HepG2 (cell line): ENCODE measurements at regions of chr6 and their contacts with region 1.

Region 1: DNA sequence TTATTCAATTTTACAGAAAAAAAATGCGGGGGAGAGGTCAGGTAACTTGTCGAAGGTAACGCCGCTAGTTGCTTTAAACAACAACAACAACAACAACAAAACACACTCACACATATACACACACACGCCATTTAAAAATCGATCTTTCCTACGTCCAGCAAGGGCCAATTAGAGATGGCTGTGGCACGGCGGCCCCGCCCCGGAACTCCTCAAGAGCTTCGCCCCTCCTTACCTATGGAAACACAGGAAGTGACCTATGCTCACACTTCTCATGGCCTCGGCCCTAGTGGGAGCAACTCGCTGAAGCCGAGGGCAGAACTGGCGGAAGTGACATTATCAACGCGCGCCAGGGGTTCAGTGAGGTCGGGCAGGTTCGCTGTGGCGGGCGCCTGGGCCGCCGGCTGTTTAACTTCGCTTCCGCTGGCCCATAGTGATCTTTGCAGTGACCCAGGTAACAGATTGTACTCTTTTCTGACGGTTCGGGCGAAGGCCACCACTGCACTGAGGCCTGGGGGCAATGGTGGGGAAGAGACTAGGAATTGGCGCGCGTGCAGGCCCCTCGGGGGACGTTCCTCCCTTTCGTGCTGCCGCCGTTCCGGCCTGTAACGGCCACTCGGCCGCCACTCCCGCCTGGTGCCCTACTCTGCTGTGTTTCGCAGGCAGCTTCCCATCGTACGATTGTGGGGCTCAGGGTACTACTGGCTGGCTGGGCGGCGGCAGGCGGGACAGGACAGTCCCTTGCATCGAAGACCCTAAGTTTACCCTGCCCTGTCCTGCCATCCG is at the start of gene TBP:
- DNase-seq: peak; percentile 100
- ATAC-seq: peak; percentile 92
- H3K4me3 ChIP-seq: peak within 1 kb of the TSS; percentile 98 to 99 (median 98)
- H3K27ac ChIP-seq: peak within 1 kb of the TSS; percentile 95
- H3K4me1 ChIP-seq: peaks cover 51% of the 10 kb centered on the region
- H3K27me3 ChIP-seq: peaks cover 0 to 5% of the 10 kb centered on the region in 2 experiments; a peak in 1 of 5 replicates
- CTCF ChIP-seq: peak; percentile 26; the same call in 1 of the 2 replicates
- EP300 ChIP-seq: peak in 1 of 2 experiments; percentile 40; a peak in 2 of 4 replicates
- POLR2A ChIP-seq: peak; percentile 75 to 93
- RAD21 ChIP-seq: peak; percentile 40; the same call in 1 of the 2 replicates
- total RNA-seq, gene TBP: 21.7 and 25.9 TPM in 2 replicates

Region 2: DNA sequence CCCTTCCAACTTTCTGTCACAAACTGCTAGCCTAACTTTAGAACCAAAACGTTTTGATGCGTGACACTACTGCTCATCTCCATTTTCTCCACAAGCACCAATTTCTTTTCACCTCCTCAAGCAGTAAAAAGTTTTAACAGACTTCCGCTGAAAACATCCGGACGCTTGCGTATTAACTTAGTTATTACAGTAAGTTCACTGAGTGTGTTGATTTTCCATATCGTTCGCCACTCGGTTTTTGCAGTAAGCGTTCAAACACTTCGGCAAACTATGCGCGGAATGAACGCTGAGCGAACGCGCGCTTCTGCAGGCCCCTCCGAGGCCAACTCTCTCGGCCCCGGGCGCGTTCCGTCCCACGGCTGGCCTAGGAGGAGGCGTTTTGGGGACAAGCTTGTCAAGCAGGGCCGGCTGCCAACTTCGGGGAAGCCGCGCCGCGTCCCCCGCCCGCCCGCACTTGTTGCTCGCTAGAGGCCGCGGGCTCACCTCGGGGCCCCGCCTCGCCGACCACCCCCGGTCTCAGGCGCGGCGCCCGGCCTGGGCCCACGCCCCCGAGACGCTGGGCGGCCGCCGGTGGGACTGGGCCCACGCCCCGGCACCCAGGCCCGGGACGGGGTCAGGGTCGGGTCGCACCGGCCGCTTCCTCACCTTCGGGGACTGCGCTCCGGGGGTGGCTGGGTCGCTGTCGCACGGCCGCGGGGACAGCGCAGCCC is 830.8 kb before region 1 on chr6:
- CTCF ChIA-PET with region 1: no interaction called
- POLR2A ChIA-PET with region 1: interaction called, 11 read pairs
- in situ Hi-C with region 1: no loop called
- intact Hi-C with region 1: no loop called
- DNase-seq: peak; percentile 39
- ATAC-seq: peak; percentile 20
- H3K4me3 ChIP-seq: peak overlapping the region; percentile 82 to 93 (median 90)
- H3K27ac ChIP-seq: peak overlapping the region; percentile 72
- H3K4me1 ChIP-seq: peaks cover 60% of the 10 kb centered on the region
- H3K27me3 ChIP-seq: no peaks in the 10 kb centered on the region; a peak in 1 of 5 replicates
- CTCF ChIP-seq: 0 out of 2 replicates have a peak, but pooled peaks have one; percentile 10
- EP300 ChIP-seq: no peak
- POLR2A ChIP-seq: no peak
- RAD21 ChIP-seq: peak; percentile 28; the same call in 1 of the 2 replicates

Region 3: DNA sequence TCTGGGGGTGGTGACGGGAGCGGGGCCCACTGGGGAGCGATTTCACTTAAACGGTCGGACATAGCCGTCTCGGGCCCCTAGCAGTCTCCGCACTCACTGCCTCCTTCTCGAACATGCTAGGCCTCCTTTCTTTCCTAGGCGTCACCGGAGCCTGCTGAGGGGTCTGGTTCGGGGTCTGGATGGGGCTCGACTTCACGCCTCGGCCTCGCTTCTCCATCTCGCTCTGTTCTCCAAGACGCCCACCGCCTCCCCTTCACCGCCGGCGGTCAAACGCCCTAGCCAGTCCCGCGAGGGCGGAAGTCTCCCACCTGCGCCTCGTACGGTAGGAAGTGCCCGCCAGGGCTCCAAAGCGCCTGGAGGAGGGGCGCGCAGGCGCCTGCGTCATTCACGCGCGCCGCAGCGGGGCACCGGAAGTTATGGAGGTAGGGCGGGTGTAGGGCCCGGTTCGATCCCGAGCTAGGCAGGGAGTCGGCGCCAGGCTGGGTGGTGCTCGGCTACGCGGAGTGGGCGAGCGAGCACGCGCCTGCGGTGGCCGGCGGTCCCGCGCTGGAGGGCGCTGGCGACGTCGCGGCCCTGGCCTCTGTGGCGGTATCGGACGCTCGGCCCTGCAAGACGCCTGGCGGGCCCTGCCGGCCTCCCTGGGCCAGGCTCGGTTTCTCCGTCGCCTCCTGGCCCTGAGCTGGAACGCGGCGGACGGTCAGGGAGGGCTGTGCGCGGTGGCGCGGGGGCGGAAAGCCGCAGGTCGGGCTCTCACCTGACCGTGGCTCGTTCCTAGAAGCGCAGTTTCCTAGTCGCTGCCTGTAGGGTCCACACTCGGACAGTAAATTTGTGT is 802.7 kb before region 1 on chr6 and contains the starts of genes DYNLT2 and ERMARD:
- CTCF ChIA-PET with region 1: no interaction called
- POLR2A ChIA-PET with region 1: interaction called, 22 read pairs
- in situ Hi-C with region 1: loop called (anchors 5 kb)
- intact Hi-C with region 1: loop called (anchors 1 kb)
- DNase-seq: peak; percentile 96
- ATAC-seq: peak; percentile 95
- H3K4me3 ChIP-seq: peak within 1 kb of the TSS; percentile 88 to 91 (median 90)
- H3K27ac ChIP-seq: peak within 1 kb of the TSS; percentile 96
- H3K4me1 ChIP-seq: peaks cover 48% of the 10 kb centered on the region
- H3K27me3 ChIP-seq: no peaks in the 10 kb centered on the region; a peak in 1 of 5 replicates
- CTCF ChIP-seq: peak; percentile 52
- EP300 ChIP-seq: peak in 1 of 2 experiments; percentile 68; a peak in 3 of 4 replicates
- POLR2A ChIP-seq: peak; percentile 90 to 99
- RAD21 ChIP-seq: peak; percentile 88
- total RNA-seq, gene DYNLT2: 3.1 and 4.3 TPM in 2 replicates
- total RNA-seq, gene ERMARD: 8.4 and 10.7 TPM in 2 replicates

Region 4: DNA sequence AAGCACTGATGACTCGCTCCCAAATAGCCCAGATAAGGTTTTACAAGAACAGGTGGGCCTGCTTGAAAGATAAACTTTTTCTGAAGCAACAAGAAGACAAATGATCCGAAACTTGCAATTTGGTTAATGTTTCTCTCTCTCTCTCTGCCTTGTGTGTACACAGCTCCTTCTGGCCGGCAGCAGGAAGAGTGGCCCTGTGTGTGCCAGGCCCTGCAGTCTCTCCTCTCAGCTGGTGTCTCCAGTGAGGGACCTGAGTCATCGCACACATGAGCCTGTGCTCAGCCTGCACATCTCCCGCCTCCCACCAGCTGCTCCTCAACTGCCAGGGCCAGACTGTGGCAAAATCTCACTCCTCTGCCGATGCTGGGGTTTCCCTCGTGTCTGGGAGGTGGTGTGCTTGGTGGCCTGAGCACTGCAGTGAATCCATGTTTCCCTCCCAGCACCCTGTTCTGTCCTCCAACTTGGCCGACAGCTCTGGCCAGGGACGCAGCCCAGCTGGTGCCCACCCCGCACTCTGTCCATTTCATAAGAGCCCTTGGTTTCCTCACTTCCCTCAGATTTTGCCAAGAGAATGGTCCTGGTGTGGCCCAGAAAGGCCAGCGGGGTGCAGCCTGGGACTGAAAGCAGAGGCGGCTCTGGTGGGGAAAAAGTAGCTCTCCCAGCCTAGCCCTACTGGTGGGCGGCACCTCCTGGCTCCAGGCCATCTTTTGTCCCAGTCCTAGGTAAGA is 753.4 kb before region 1 on chr6:
- CTCF ChIA-PET with region 1: no interaction called
- POLR2A ChIA-PET with region 1: interaction called, 3 read pairs
- in situ Hi-C with region 1: no loop called
- intact Hi-C with region 1: loop called (anchors 5 kb)
- DNase-seq: peak; percentile 91
- ATAC-seq: peak; percentile 88
- H3K4me3 ChIP-seq: peak overlapping the region; percentile 41 to 74 (median 51)
- H3K27ac ChIP-seq: peak overlapping the region; percentile 82
- H3K4me1 ChIP-seq: peaks cover 80% of the 10 kb centered on the region
- H3K27me3 ChIP-seq: no peaks in the 10 kb centered on the region
- CTCF ChIP-seq: 0 out of 2 replicates have a peak, but pooled peaks have one; percentile 11
- EP300 ChIP-seq: peak; percentile 72 to 91
- POLR2A ChIP-seq: peak; percentile 55 to 72
- RAD21 ChIP-seq: no peak; the same call in 1 of the 2 replicates

Region 5: GRCh38 chr6:170279977-170280688 is 274.1 kb before region 1 on chr6:
- CTCF ChIA-PET with region 1: no interaction called
- POLR2A ChIA-PET with region 1: no interaction called
- in situ Hi-C with region 1: no loop called
- intact Hi-C with region 1: no loop called
- DNase-seq: no peak
- ATAC-seq: peak; percentile 61
- H3K4me3 ChIP-seq: peak overlapping the region in 1 of 3 experiments; percentile 18; a peak in 1 of 6 replicates
- H3K27ac ChIP-seq: no peak overlapping the region
- H3K4me1 ChIP-seq: peaks cover 8% of the 10 kb centered on the region; the same call in 1 of the 2 replicates
- H3K27me3 ChIP-seq: peaks cover 14 to 81% of the 10 kb centered on the region in 2 experiments
- CTCF ChIP-seq: no peak
- EP300 ChIP-seq: no peak
- POLR2A ChIP-seq: no peak
- RAD21 ChIP-seq: no peak

Region 6: GRCh38 chr6:170306324-170307079 is 247.7 kb before region 1 on chr6 and contains the start of gene FAM120B:
- CTCF ChIA-PET with region 1: no interaction called
- POLR2A ChIA-PET with region 1: no interaction called
- in situ Hi-C with region 1: no loop called
- intact Hi-C with region 1: loop called (anchors 5 kb)
- DNase-seq: peak; percentile 94
- ATAC-seq: peak; percentile 97
- H3K4me3 ChIP-seq: peak within 1 kb of the TSS; percentile 78 to 98 (median 92)
- H3K27ac ChIP-seq: peak within 1 kb of the TSS; percentile 67
- H3K4me1 ChIP-seq: peaks cover 28% of the 10 kb centered on the region
- H3K27me3 ChIP-seq: no peaks in the 10 kb centered on the region; a peak in 1 of 5 replicates
- CTCF ChIP-seq: peak; percentile 24; the same call in 1 of the 2 replicates
- EP300 ChIP-seq: 0 out of 4 replicates have a peak, but pooled peaks of 1 of the 2 experiments have one; percentile 10
- POLR2A ChIP-seq: peak; percentile 97 to 99
- RAD21 ChIP-seq: peak; percentile 63
- total RNA-seq, gene FAM120B: 10.7 and 18.3 TPM in 2 replicates

Region 7: DNA sequence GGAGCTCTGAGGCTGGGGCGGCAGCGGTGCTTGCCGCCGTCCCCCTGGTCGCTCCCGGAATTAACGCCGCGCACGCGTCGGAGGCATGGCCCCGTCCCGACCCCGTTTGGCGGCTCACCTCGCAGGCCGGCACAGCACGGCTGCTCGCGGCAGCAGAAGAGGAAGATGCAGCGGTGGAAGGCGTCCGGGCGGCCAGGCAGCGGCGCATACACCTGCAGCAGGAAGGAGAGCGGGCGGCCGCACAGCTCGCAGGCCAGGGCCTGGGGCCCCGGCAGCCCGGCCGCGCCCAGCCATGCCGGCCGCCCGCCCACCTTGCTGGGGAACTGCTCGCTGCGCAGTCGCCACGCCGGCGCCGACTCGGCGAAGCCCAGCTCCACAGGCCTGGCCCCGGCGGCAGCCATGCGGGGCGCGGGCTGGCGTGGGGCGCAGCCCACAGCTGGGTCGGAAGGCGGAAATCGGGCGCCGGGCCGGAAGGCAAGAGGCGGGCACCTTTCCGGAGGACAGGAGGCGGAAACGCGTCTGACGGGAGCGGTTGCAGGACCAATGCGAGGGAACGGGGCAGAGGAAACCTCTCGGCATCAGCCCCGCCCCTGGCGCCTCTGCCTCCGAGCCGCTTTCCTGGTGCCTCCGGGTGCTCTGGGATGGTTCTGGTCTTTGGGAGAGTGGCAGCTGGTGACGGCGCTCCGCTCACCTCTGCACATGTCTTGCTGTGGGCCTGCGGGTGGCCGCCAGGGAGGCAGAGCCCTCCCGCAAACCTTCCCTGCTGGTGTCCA is 30.2 kb after region 1 on chr6 and contains the start of gene PDCD2:
- CTCF ChIA-PET with region 1: no interaction called
- POLR2A ChIA-PET with region 1: interaction called, 20 read pairs
- in situ Hi-C with region 1: no loop called
- intact Hi-C with region 1: loop called (anchors 1 kb)
- DNase-seq: peak; percentile 91
- ATAC-seq: peak; percentile 97
- H3K4me3 ChIP-seq: peak within 1 kb of the TSS; percentile 93 to 97 (median 96)
- H3K27ac ChIP-seq: peak within 1 kb of the TSS; percentile 79
- H3K4me1 ChIP-seq: peaks cover 25% of the 10 kb centered on the region
- H3K27me3 ChIP-seq: no peaks in the 10 kb centered on the region; a peak in 1 of 5 replicates
- CTCF ChIP-seq: no peak; the same call in 1 of the 2 replicates
- EP300 ChIP-seq: peak; percentile 17 to 60; a peak in 3 of 4 replicates
- POLR2A ChIP-seq: peak; percentile 77 to 96
- RAD21 ChIP-seq: no peak; the same call in 1 of the 2 replicates
- total RNA-seq, gene PDCD2: 133 and 148 TPM in 2 replicates